ENCODE measurements at regions of chr17 and their contacts with region 1.

Region 1: GRCh38 chr17:44170499-44171201 is at the start of gene ASB16:
- DNase-seq: no peak
- H3K4me3 ChIP-seq: no peak within 1 kb of the TSS
- H3K27ac ChIP-seq: no peak within 1 kb of the TSS
- H3K4me1 ChIP-seq: peaks cover 5% of the 10 kb centered on the region
- H3K27me3 ChIP-seq: no peaks in the 10 kb centered on the region
- CTCF ChIP-seq: no peak
- total RNA-seq, gene ASB16: not detected

Region 2: DNA sequence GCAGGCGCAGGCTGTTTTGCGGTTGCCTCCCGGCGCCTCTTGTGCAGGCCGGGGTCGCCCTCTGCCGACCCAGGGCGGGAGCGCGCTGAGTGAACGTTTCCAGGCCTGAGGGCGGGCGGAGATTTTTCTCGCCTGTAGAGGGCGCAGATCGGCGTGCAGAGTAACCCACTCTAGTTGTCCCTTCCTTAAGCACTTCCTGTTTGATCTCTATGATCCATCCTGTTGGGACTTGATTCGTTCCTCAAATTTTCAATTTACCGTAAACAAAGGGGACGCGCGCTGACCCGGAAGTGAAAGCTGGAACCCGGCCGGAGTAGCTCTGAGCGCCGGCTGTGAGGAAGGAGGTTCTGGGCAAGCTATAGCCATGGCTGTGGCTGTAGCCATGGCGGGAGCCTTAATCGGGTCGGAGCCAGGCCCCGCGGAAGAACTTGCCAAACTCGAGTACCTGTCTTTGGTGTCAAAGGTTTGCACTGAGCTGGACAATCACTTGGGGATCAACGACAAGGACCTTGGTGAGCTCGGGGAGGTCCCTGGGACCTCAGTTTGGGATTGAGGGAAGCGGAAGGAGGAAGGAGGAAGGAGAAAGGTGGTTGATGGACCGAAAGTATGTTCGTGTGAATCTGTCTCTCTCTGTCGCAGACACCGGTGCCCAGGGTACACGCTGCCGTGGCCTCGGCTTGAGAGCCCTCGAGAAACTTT is 686.8 kb before region 1 on chr17 and contains the start of gene DHX8:
- CTCF ChIA-PET with region 1: no interaction called
- dilution Hi-C with region 1: no loop called
- in situ Hi-C with region 1: no loop called
- intact Hi-C with region 1: no loop called
- DNase-seq: peak; percentile 98
- H3K4me3 ChIP-seq: peak within 1 kb of the TSS; percentile 67 to 89 (median 78)
- H3K27ac ChIP-seq: peak within 1 kb of the TSS; percentile 80
- H3K4me1 ChIP-seq: peaks cover 15% of the 10 kb centered on the region
- H3K27me3 ChIP-seq: no peaks in the 10 kb centered on the region
- CTCF ChIP-seq: peak; percentile 100
- total RNA-seq, gene DHX8: 41.3 to 58.8 TPM

Region 3: GRCh38 chr17:43854453-43854852 is 316.2 kb before region 1 on chr17:
- CTCF ChIA-PET with region 1: interaction called, 13 read pairs
- dilution Hi-C with region 1: no loop called
- in situ Hi-C with region 1: no loop called
- intact Hi-C with region 1: no loop called
- DNase-seq: no peak
- H3K4me3 ChIP-seq: no peak overlapping the region
- H3K27ac ChIP-seq: no peak overlapping the region
- H3K4me1 ChIP-seq: no peaks in the 10 kb centered on the region
- H3K27me3 ChIP-seq: no peaks in the 10 kb centered on the region
- CTCF ChIP-seq: no peak

Region 4: GRCh38 chr17:43878260-43879175 is 292.1 kb before region 1 on chr17:
- CTCF ChIA-PET with region 1: interaction called, 3 read pairs
- dilution Hi-C with region 1: no loop called
- in situ Hi-C with region 1: no loop called
- intact Hi-C with region 1: loop called (anchors 1 kb)
- DNase-seq: peak; percentile 76
- H3K4me3 ChIP-seq: no peak overlapping the region
- H3K27ac ChIP-seq: no peak overlapping the region
- H3K4me1 ChIP-seq: peaks cover 4% of the 10 kb centered on the region
- H3K27me3 ChIP-seq: no peaks in the 10 kb centered on the region
- CTCF ChIP-seq: peak; percentile 93 to 99

Region 5: GRCh38 chr17:44044067-44044466 is 126.6 kb before region 1 on chr17:
- CTCF ChIA-PET with region 1: no interaction called
- dilution Hi-C with region 1: no loop called
- in situ Hi-C with region 1: no loop called
- intact Hi-C with region 1: loop called (anchors 1 kb)
- DNase-seq: peak; percentile 33
- H3K4me3 ChIP-seq: no peak overlapping the region
- H3K27ac ChIP-seq: no peak overlapping the region
- H3K4me1 ChIP-seq: peaks cover 27% of the 10 kb centered on the region
- H3K27me3 ChIP-seq: no peaks in the 10 kb centered on the region
- CTCF ChIP-seq: no peak

Region 6: GRCh38 chr17:44086364-44087311 is 84.0 kb before region 1 on chr17:
- CTCF ChIA-PET with region 1: interaction called, 14 read pairs
- dilution Hi-C with region 1: no loop called
- in situ Hi-C with region 1: loop called in 1 of 2 experiments (anchors 25 kb)
- intact Hi-C with region 1: loop called (anchors 1 kb)
- DNase-seq: peak; percentile 88
- H3K4me3 ChIP-seq: no peak overlapping the region
- H3K27ac ChIP-seq: peak overlapping the region; percentile 56
- H3K4me1 ChIP-seq: peaks cover 27% of the 10 kb centered on the region
- H3K27me3 ChIP-seq: no peaks in the 10 kb centered on the region
- CTCF ChIP-seq: no peak

Region 7: GRCh38 chr17:44141717-44142285 is 28.8 kb before region 1 on chr17 and contains the start of gene HROB:
- CTCF ChIA-PET with region 1: no interaction called
- dilution Hi-C with region 1: no loop called
- in situ Hi-C with region 1: no loop called
- intact Hi-C with region 1: loop called (anchors 1 kb)
- DNase-seq: peak; percentile 93
- H3K4me3 ChIP-seq: peak within 1 kb of the TSS; percentile 82 to 87 (median 86)
- H3K27ac ChIP-seq: peak within 1 kb of the TSS; percentile 92
- H3K4me1 ChIP-seq: peaks cover 24% of the 10 kb centered on the region
- H3K27me3 ChIP-seq: no peaks in the 10 kb centered on the region
- CTCF ChIP-seq: peak; percentile 93 to 95
- total RNA-seq, gene HROB: 3.0 to 10.3 TPM